Activated CD4-positive, alpha-beta T cell treated with anti-CD3 and anti-CD28 coated beads, Interleukin-2, amount 10 ng/mL, durations not matched to agents 24 days and 14 days (primary cell): ENCODE measurements at regions of chr9 and their contacts with region 1.

Region 1: DNA sequence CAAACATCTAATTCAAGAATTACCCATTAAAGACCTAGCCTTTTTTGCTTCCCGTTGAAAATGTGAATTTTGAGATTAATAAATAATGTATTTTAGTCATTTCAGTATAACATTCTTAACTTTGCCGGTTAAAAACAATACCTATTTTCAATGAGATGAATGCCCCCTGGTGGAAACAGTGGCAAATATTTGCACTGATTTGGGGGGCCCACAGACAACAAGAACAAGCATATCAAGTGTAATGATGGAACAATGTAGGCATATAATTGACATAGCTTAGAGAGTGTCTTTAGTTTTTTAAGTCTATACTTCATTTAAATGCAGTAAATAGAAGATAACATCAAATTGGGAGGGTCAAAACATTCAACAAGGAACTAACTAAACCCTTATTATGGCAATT is 111.9 kb downstream of the NTRK2 start:
- DNase-seq: peak; percentile 70
- H3K4me3 Mint-ChIP-seq: no peak overlapping the region
- H3K27ac Mint-ChIP-seq: no peak overlapping the region
- H3K4me1 Mint-ChIP-seq: peaks cover 3% of the 10 kb centered on the region
- H3K27me3 Mint-ChIP-seq: peaks cover 16% of the 10 kb centered on the region

Region 2: GRCh38 chr9:84404095-84404686 is 377.3 kb before region 1 on chr9:
- intact Hi-C with region 1: loop called (anchors 10 kb)
- DNase-seq: no peak
- H3K4me3 Mint-ChIP-seq: no peak overlapping the region
- H3K27ac Mint-ChIP-seq: no peak overlapping the region
- H3K4me1 Mint-ChIP-seq: no peaks in the 10 kb centered on the region
- H3K27me3 Mint-ChIP-seq: no peaks in the 10 kb centered on the region

Region 3: GRCh38 chr9:84793251-84793650 is 11.8 kb after region 1 on chr9:
- intact Hi-C with region 1: no loop called
- DNase-seq: no peak
- H3K4me3 Mint-ChIP-seq: no peak overlapping the region
- H3K27ac Mint-ChIP-seq: no peak overlapping the region
- H3K4me1 Mint-ChIP-seq: no peaks in the 10 kb centered on the region
- H3K27me3 Mint-ChIP-seq: peaks cover 11% of the 10 kb centered on the region

Region 4: GRCh38 chr9:84947363-84947972 is 166.0 kb after region 1 on chr9:
- intact Hi-C with region 1: no loop called
- DNase-seq: no peak
- H3K4me3 Mint-ChIP-seq: no peak overlapping the region
- H3K27ac Mint-ChIP-seq: no peak overlapping the region
- H3K4me1 Mint-ChIP-seq: no peaks in the 10 kb centered on the region
- H3K27me3 Mint-ChIP-seq: no peaks in the 10 kb centered on the region